GM12878 (cell line): ENCODE measurements at regions of chr1 and their contacts with region 1.

Region 1: GRCh38 chr1:89022167-89022959 is at the start of gene GBP3:
- DNase-seq: peak; percentile 33
- ATAC-seq: peak; percentile 88
- H3K4me3 ChIP-seq: peak within 1 kb of the TSS; percentile 65
- H3K27ac ChIP-seq: peak within 1 kb of the TSS; percentile 52
- H3K4me1 ChIP-seq: peaks cover 3% of the 10 kb centered on the region; the same call in 1 of the 2 replicates
- H3K27me3 ChIP-seq: no peaks in the 10 kb centered on the region
- CTCF ChIP-seq: no peak
- EP300 ChIP-seq: no peak
- POLR2A ChIP-seq: no peak
- RAD21 ChIP-seq: no peak
- polyA plus RNA-seq, gene GBP3: 0.32 to 1.2 TPM

Region 2: DNA sequence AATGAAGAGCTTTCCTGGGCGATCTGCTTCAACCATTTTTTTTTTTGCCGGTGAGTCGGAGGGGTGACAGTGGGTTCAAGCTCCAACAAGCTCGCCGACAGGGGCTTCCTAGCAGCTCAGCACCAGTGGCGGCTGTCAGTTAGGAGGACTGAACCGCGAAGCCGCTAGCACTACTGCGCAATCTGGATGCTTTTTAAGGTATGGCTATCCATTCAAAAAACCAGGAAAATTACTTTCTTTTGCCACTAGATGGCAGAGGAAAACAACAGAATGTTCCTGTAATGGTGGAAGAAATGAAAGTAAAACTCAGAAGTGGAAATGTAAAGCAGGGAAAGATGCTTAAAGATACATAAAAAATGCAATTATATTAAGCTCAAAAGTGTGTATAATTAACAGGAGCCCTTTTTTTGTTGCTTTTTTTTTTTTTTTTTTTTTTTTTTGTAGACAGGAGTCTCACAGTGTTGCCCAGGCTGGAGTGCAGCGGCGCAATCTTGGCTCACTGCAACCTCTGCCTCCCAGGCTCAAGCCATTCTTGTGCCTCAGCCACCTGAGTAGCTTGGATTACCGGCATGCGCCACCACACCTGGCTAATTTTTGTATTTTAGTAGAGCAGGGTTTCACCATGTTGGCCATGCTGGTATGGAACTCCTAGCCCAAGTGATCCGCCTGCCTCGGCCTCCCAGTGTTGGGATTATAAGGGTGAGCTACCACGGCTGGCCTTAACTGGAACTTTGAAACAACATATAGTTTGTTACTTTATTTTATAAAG is 38.4 kb before region 1 on chr1:
- CTCF ChIA-PET with region 1: interaction called, 7 read pairs
- POLR2A ChIA-PET with region 1: no interaction called
- RAD21 ChIA-PET with region 1: interaction called, 4 read pairs
- SMC1A ChIA-PET with region 1: interaction called, 16 read pairs
- in situ Hi-C with region 1: no loop called
- intact Hi-C with region 1: no loop called
- DNase-seq: no peak
- ATAC-seq: peak; percentile 54
- H3K4me3 ChIP-seq: no peak overlapping the region
- H3K27ac ChIP-seq: peak overlapping the region; percentile 27; the same call in 1 of the 2 replicates
- H3K4me1 ChIP-seq: peaks cover 7% of the 10 kb centered on the region
- H3K27me3 ChIP-seq: no peaks in the 10 kb centered on the region
- CTCF ChIP-seq: peak; percentile 44 to 55 (median 45); a peak in 5 of 6 replicates
- EP300 ChIP-seq: no peak
- POLR2A ChIP-seq: no peak
- RAD21 ChIP-seq: peak; percentile 43

Region 3: DNA sequence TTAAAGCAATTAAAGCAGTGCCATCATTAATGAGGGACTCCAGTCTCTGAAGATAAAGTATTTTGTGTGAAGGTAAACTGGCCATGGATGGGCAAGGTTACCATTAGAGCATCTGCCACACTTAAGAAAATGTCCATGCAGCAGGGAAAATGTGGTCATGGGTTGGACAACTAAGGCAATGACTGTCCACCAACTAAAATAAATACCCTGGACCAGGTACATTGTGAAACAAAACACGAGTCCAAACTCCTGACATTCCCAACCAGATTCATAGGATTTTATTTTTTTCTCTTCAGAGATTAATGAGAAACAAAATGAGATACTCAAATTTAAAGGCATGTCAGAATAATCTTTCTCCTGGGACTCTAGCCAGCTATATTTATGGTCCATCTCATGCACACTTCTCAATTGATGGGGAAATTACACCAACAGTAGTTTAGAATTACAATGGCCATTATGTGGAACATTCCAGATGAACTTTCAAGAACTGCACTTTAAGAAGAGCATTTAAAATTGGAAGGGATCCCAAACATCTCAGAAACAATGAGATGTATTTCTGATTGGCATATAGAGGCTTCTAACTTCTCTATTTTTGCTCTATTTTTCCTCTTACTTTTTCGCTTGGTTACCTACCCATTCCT is 145.3 kb after region 1 on chr1:
- CTCF ChIA-PET with region 1: no interaction called
- POLR2A ChIA-PET with region 1: no interaction called
- RAD21 ChIA-PET with region 1: no interaction called
- SMC1A ChIA-PET with region 1: no interaction called
- in situ Hi-C with region 1: no loop called
- intact Hi-C with region 1: no loop called
- DNase-seq: no peak
- ATAC-seq: no peak
- H3K4me3 ChIP-seq: no peak overlapping the region
- H3K27ac ChIP-seq: no peak overlapping the region
- H3K4me1 ChIP-seq: no peaks in the 10 kb centered on the region
- H3K27me3 ChIP-seq: no peaks in the 10 kb centered on the region
- CTCF ChIP-seq: no peak
- EP300 ChIP-seq: no peak
- POLR2A ChIP-seq: no peak
- RAD21 ChIP-seq: no peak